RWPE1 (cell line): ENCODE measurements at regions of chr20 and their contacts with region 1.

Region 1: DNA sequence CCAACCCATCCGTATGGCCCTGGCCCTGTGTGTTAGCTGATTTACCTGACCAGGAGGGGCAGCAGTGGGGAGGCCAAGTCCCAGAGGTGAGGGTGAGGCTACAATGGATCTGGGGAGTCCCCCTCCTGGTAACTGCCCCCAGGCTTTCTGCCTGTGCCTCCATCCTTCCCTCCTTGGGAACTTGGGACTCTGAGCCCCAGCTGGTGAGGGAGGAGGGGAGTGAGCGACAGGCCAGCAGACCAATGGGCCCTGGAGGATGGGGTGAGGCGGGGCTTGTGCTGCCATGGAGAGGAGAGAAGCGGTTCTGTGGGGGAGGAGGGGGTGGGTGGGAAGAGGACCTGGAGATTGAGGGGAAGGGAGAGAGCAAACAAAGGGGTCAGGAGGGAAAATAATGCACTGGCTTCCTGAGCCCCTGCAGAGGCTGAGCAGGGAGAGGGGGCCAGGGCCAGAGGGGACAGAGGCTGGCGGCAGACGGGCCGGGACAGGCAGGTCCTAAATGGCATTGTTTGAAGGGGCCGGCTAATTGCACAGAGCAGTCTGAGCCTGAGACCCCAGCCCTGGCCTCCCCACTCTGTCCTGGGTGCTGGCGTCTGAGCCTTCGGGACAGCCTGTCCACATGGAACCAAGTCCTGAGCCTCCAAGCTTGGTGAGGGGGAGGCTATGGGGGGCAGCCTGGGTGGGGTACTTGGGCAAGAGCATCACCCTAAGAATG is 17.5 kb downstream of the DNMT3B start:
- DNase-seq: no peak
- H3K27ac ChIP-seq: no peak overlapping the region
- CTCF ChIP-seq: no peak

Region 2: GRCh38 chr20:32509639-32510066 is 270.0 kb before region 1 on chr20:
- CTCF ChIA-PET with region 1: no interaction called
- POLR2A ChIA-PET with region 1: no interaction called
- DNase-seq: no peak
- H3K27ac ChIP-seq: no peak overlapping the region
- CTCF ChIP-seq: no peak

Region 3: GRCh38 chr20:32521780-32522525 is 257.7 kb before region 1 on chr20:
- CTCF ChIA-PET with region 1: interaction called, 26 read pairs
- POLR2A ChIA-PET with region 1: no interaction called
- DNase-seq: peak; percentile 92
- H3K27ac ChIP-seq: no peak overlapping the region
- CTCF ChIP-seq: peak; percentile 94

Region 4: GRCh38 chr20:32610472-32611218 is 169.0 kb before region 1 on chr20:
- CTCF ChIA-PET with region 1: no interaction called
- POLR2A ChIA-PET with region 1: no interaction called
- DNase-seq: no peak
- H3K27ac ChIP-seq: no peak overlapping the region
- CTCF ChIP-seq: no peak

Region 5: GRCh38 chr20:32674362-32674789 is 105.3 kb before region 1 on chr20:
- CTCF ChIA-PET with region 1: interaction called, 152 read pairs
- POLR2A ChIA-PET with region 1: no interaction called
- DNase-seq: peak; percentile 82
- H3K27ac ChIP-seq: no peak overlapping the region
- CTCF ChIP-seq: peak; percentile 84

Region 6: DNA sequence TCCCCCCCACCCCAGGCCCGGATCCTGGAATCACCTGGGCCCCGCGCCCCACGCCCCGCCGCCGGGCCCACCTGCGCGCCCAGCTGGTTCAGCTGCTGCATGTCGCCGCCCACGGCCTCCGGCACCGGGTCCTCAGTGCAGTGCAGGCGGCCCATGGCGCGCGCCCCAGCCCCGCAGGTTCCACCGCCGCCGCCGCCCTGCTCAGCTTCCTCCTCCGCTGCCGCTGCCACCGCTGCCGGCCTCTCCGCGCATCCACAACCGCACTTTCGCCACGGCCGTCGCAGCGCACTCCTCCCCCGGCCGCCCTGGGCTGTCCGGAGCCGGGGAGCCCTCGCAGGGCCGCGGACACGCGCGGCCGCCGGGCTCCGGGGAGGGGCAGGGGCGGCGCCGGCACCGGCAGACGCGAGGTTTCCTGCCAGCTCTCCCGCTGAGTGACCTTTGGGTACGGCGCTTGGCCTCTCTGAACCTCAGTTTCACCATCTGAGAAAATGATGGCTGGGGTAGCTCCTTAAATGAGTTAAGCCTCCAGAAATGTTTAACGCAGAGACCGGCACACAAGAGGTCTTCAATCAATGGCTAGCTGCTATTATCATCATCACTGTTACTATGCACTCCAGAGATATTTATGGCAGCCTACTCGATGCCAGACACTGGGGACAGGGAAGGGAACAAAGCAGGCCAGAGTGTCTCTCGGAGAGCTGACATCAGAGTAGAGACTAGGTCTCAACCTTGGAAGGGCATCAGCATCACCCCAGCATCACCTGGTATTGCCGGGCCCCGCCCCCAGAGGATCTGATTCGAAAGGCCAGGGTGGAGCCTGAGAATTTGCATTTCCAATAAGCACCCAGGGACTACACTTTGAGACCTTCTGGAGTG is 36.2 kb before region 1 on chr20 and contains the start of gene COMMD7:
- CTCF ChIA-PET with region 1: interaction called, 13 read pairs
- POLR2A ChIA-PET with region 1: no interaction called
- DNase-seq: no peak
- H3K27ac ChIP-seq: peak within 1 kb of the TSS; percentile 8
- CTCF ChIP-seq: no peak

Region 7: DNA sequence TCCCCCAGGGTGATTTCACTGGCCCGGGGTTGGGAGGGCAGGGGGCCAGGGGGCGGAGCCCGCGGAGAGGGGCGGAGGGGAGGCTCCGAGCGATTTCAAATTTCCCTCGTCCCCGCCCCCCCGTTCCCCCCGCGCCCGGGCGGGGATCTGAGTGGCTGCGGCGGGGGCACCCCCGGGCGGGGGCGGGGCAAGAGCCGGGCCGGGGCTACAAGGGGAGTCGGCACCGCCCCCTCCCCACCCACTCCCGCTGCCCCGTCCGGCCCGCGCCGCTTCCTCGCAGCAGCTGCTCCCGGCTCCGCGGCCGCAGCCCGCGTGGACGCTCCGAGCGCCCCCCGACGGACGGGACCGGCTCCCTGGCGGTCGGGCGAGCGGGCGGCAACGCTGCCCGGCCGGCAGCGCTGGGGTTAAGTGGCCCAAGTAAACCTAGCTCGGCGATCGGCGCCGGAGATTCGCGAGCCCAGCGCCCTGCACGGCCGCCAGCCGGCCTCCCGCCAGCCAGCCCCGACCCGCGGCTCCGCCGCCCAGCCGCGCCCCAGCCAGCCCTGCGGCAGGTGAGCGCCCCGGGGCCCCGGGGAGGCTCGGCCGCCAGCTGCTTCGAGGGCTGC is 17.4 kb before region 1 on chr20 and contains the start of gene DNMT3B:
- CTCF ChIA-PET with region 1: interaction called, 29 read pairs
- POLR2A ChIA-PET with region 1: interaction called, 3 read pairs
- DNase-seq: peak; percentile 85
- H3K27ac ChIP-seq: peak within 1 kb of the TSS; percentile 38
- CTCF ChIP-seq: no peak; the same call in 1 of the 2 replicates

Region 8: GRCh38 chr20:32789896-32790750 is 10.5 kb after region 1 on chr20:
- CTCF ChIA-PET with region 1: interaction called, 20 read pairs
- POLR2A ChIA-PET with region 1: no interaction called
- DNase-seq: peak; percentile 97
- H3K27ac ChIP-seq: no peak overlapping the region
- CTCF ChIP-seq: peak; percentile 100

Region 9: DNA sequence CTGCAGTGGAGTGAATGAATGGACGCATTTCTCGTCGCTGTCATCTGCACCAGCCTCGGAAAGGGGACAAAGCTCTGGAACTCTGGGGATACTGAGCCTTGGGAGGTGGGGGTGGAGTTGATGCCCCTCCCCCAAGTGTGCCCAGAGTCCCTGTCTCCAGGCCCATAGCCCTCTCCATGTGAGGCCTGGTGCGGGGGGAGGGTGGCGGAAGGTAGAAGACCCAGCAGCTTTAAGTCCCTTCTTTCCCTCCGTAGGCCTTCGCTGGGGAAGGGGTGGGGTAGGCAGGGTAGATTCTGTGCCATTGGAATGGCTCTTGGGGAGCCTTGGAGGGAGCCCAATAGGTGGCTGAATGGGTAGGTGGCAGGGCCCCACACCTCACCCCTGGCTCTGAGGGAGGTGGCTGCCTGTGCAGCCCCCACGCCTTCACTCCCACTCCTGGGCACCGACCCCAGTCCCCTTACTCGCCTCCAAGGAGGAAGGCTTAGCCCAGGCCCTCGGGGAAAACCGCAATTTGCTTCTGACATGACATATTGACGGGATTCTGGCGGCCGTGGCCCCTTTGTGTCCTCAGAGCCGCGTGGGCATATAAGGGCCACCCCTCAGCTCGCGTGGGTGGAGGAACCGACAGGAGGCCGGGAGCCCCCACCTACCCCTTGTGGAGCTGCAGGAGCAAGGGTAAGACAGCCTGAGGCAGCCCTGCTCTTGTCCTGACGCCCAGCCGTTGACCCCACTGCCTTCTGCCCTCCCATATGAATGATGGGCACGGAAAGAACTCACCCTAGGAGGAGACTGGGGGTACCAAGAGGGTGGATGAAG is 273.8 kb after region 1 on chr20 and contains the start of gene BPIFB3:
- CTCF ChIA-PET with region 1: no interaction called
- POLR2A ChIA-PET with region 1: no interaction called
- DNase-seq: no peak
- H3K27ac ChIP-seq: no peak within 1 kb of the TSS
- CTCF ChIP-seq: no peak